Dendritic cell treated with granulocyte-macrophage colony-stimulating factor and Interleukin-4, amounts not matched to agents 40 ng/mL and 50 ng/mL, for 4 days (primary cell): ENCODE measurements at regions of chr13 and their contacts with region 1.

Region 1: GRCh38 chr13:102580552-102581169 is 16.1 kb upstream of the TPP2 start:
- H3K4me3 Mint-ChIP-seq: no peak overlapping the region
- H3K27ac Mint-ChIP-seq: no peak overlapping the region
- H3K4me1 Mint-ChIP-seq: peaks cover 23% of the 10 kb centered on the region
- H3K27me3 Mint-ChIP-seq: no peaks in the 10 kb centered on the region

Region 2: DNA sequence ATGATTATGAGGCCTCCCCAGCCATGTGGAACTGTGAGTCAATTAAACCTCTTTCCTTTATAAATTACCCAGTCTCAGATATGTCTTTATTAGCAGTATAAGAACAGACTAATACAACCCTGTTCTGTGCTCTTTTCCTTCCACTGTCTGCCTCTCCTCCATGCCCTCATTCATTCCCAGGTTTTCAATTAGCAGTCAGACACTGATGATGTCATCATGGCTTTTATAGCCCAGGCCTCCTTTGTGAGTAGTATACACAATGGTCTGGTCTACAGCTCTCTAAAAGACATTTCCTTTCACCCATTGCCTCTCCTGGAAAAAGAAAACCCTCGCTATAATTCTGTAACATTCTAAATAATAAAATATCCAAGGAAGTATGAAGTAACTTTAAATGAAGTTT is 204.3 kb before region 1 on chr13:
- intact Hi-C with region 1: no loop called
- H3K4me3 Mint-ChIP-seq: no peak overlapping the region
- H3K27ac Mint-ChIP-seq: no peak overlapping the region
- H3K4me1 Mint-ChIP-seq: no peaks in the 10 kb centered on the region
- H3K27me3 Mint-ChIP-seq: peaks cover 1% of the 10 kb centered on the region

Region 3: GRCh38 chr13:102620516-102620915 is 39.9 kb after region 1 on chr13:
- intact Hi-C with region 1: loop called (anchors 5 kb)
- H3K4me3 Mint-ChIP-seq: no peak overlapping the region
- H3K27ac Mint-ChIP-seq: no peak overlapping the region
- H3K4me1 Mint-ChIP-seq: no peaks in the 10 kb centered on the region
- H3K27me3 Mint-ChIP-seq: no peaks in the 10 kb centered on the region

Region 4: GRCh38 chr13:102724923-102725322 is 144.3 kb after region 1 on chr13:
- intact Hi-C with region 1: loop called (anchors 2 kb)
- H3K4me3 Mint-ChIP-seq: no peak overlapping the region
- H3K27ac Mint-ChIP-seq: no peak overlapping the region
- H3K4me1 Mint-ChIP-seq: peaks cover 6% of the 10 kb centered on the region
- H3K27me3 Mint-ChIP-seq: peaks cover 2% of the 10 kb centered on the region

Region 5: GRCh38 chr13:102800145-102801041 is 219.7 kb after region 1 on chr13:
- intact Hi-C with region 1: loop called (anchors 5 kb)
- H3K4me3 Mint-ChIP-seq: peak overlapping the region; percentile 86
- H3K27ac Mint-ChIP-seq: peak overlapping the region; percentile 70
- H3K4me1 Mint-ChIP-seq: peaks cover 25% of the 10 kb centered on the region
- H3K27me3 Mint-ChIP-seq: peaks cover 30% of the 10 kb centered on the region